Activated CD4-positive, alpha-beta memory T cell treated with anti-CD3 and anti-CD28 coated beads for 36 hours (primary cell): ENCODE measurements at regions of chr21 and their contacts with region 1.

Region 1: GRCh38 chr21:37407719-37408420 is 41.3 kb downstream of the DYRK1A start:
- DNase-seq: no peak
- H3K4me3 Mint-ChIP-seq: peak overlapping the region; percentile 22
- H3K27ac Mint-ChIP-seq: peak overlapping the region; percentile 73
- H3K4me1 Mint-ChIP-seq: peaks cover 84% of the 10 kb centered on the region
- H3K27me3 Mint-ChIP-seq: no peaks in the 10 kb centered on the region

Region 2: GRCh38 chr21:36223451-36223850 is 1184.4 kb before region 1 on chr21:
- CTCF ChIA-PET with region 1: no interaction called
- POLR2A ChIA-PET with region 1: no interaction called
- intact Hi-C with region 1: no loop called
- DNase-seq: no peak
- H3K4me3 Mint-ChIP-seq: no peak overlapping the region
- H3K27ac Mint-ChIP-seq: no peak overlapping the region
- H3K4me1 Mint-ChIP-seq: no peaks in the 10 kb centered on the region
- H3K27me3 Mint-ChIP-seq: no peaks in the 10 kb centered on the region

Region 3: GRCh38 chr21:37437376-37438080 is 29.7 kb after region 1 on chr21:
- CTCF ChIA-PET with region 1: no interaction called
- POLR2A ChIA-PET with region 1: no interaction called
- intact Hi-C with region 1: loop called (anchors 1 kb)
- DNase-seq: no peak
- H3K4me3 Mint-ChIP-seq: no peak overlapping the region
- H3K27ac Mint-ChIP-seq: no peak overlapping the region
- H3K4me1 Mint-ChIP-seq: peaks cover 40% of the 10 kb centered on the region
- H3K27me3 Mint-ChIP-seq: no peaks in the 10 kb centered on the region

Region 4: GRCh38 chr21:37463083-37463801 is 55.4 kb after region 1 on chr21:
- CTCF ChIA-PET with region 1: interaction called, 17 read pairs
- POLR2A ChIA-PET with region 1: interaction called, 3 read pairs
- intact Hi-C with region 1: loop called (anchors 5 kb)
- DNase-seq: peak; percentile 25
- H3K4me3 Mint-ChIP-seq: no peak overlapping the region
- H3K27ac Mint-ChIP-seq: no peak overlapping the region
- H3K4me1 Mint-ChIP-seq: peaks cover 70% of the 10 kb centered on the region
- H3K27me3 Mint-ChIP-seq: no peaks in the 10 kb centered on the region